Mammary epithelial cell (primary cell): ENCODE measurements at regions of chr12 and their contacts with region 1.

Region 1: DNA sequence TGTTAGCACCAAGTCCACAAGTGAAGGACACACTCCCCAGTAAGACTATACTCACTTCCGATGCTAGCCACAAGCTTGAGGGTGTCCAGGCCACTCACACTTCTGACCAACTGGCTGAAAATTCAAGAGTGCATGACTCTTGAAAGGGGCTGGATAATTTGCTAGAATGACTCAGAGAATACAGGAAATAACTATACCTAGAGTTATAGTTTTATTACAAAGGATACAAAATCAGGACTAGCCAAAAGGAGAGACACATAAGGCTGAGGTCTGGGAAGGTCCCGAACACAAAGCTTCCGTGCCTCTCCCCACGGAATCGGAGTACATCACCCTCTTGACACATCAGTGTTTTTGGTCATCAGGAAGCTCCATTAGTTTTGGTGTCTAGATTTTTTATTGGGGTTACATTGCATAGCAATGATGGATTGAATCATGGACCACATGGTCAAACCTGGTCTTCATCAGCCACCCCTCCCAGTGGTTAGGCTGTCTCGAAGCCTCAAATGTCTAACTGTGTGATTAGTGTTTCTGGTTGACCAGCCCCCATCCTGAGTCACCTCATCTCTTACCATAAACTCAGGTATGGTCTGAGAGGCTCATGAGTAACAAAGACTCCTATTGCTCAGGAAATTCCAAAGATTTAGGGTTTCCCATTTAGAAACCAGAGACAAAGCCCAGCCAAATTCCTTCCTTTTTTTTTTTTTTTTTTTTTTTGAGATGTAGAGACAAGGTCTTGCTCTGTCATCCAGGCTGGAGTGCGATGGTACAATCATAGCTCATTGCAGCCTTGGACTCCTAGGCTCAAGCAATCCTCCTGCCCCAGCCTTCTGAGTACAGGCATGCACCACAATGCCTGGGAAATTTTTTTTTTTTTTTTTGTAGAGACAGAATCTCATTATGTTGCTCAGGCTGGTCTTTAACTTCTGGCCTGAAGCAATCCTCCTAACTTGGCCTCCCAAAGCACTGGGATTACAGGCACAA is 472.0 kb upstream of the TBX3 start:
- DNase-seq: peak; percentile 100
- H3K4me3 ChIP-seq: no peak overlapping the region
- H3K27ac ChIP-seq: peak overlapping the region; percentile 83
- H3K4me1 ChIP-seq: peaks cover 31% of the 10 kb centered on the region
- H3K27me3 ChIP-seq: no peaks in the 10 kb centered on the region
- CTCF ChIP-seq: no peak

Region 2: GRCh38 chr12:114674239-114675047 is 481.5 kb before region 1 on chr12:
- CTCF ChIA-PET with region 1: no interaction called
- dilution Hi-C with region 1: loop called (anchors 5 kb)
- in situ Hi-C with region 1: no loop called
- intact Hi-C with region 1: no loop called
- DNase-seq: peak; percentile 36
- H3K4me3 ChIP-seq: peak overlapping the region; percentile 24 to 46 (median 33)
- H3K27ac ChIP-seq: peak overlapping the region; percentile 82
- H3K4me1 ChIP-seq: peaks cover 88% of the 10 kb centered on the region
- H3K27me3 ChIP-seq: no peaks in the 10 kb centered on the region
- CTCF ChIP-seq: peak in 1 of 2 donors; percentile 4

Region 3: GRCh38 chr12:114933428-114934168 is 222.4 kb before region 1 on chr12:
- CTCF ChIA-PET with region 1: no interaction called
- dilution Hi-C with region 1: no loop called
- in situ Hi-C with region 1: no loop called
- intact Hi-C with region 1: loop called (anchors 5 kb)
- DNase-seq: peak; percentile 83
- H3K4me3 ChIP-seq: no peak overlapping the region
- H3K27ac ChIP-seq: peak overlapping the region; percentile 57
- H3K4me1 ChIP-seq: peaks cover 25% of the 10 kb centered on the region
- H3K27me3 ChIP-seq: no peaks in the 10 kb centered on the region
- CTCF ChIP-seq: no peak

Region 4: GRCh38 chr12:115070313-115070712 is 85.6 kb before region 1 on chr12:
- CTCF ChIA-PET with region 1: no interaction called
- dilution Hi-C with region 1: no loop called
- in situ Hi-C with region 1: no loop called
- intact Hi-C with region 1: loop called (anchors 5 kb)
- DNase-seq: peak; percentile 89
- H3K4me3 ChIP-seq: no peak overlapping the region
- H3K27ac ChIP-seq: peak overlapping the region; percentile 26
- H3K4me1 ChIP-seq: no peaks in the 10 kb centered on the region
- H3K27me3 ChIP-seq: no peaks in the 10 kb centered on the region
- CTCF ChIP-seq: no peak

Region 5: GRCh38 chr12:115227137-115227615 is 71.2 kb after region 1 on chr12:
- CTCF ChIA-PET with region 1: interaction called, 6 read pairs
- dilution Hi-C with region 1: no loop called
- in situ Hi-C with region 1: no loop called
- intact Hi-C with region 1: loop called (anchors 2 kb)
- DNase-seq: peak; percentile 91
- H3K4me3 ChIP-seq: no peak overlapping the region
- H3K27ac ChIP-seq: no peak overlapping the region
- H3K4me1 ChIP-seq: peaks cover 12% of the 10 kb centered on the region
- H3K27me3 ChIP-seq: no peaks in the 10 kb centered on the region
- CTCF ChIP-seq: no peak

Region 6: DNA sequence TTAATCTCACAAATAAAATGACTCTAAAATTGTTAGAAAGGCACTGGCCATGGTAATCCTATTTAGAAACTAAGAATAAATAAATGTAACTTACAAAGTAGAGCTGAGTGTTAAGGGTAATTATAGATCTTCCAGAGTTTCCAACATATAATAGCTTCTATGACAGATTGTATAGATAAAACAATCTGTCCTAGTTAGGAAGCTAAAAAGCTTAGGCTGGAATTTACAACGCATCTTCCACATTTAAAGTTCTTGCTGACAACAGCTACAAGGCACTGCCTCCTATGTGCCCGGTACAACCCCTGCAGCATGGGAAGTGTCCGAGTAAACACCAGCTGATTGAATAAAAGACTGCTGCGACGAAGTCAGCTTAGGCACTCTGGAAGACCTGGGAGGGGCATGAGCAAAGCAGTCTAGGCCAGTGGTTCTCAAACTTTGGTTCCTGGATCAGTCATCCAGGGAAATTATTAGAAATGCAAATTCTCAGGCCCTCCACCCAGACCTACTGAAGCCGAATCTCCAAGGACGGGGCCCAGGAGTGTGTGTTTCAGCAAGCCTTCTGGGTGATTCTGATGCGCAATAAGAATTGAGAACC is 163.6 kb after region 1 on chr12:
- CTCF ChIA-PET with region 1: no interaction called
- dilution Hi-C with region 1: no loop called
- in situ Hi-C with region 1: no loop called
- intact Hi-C with region 1: loop called (anchors 5 kb)
- DNase-seq: no peak
- H3K4me3 ChIP-seq: no peak overlapping the region
- H3K27ac ChIP-seq: no peak overlapping the region
- H3K4me1 ChIP-seq: peaks cover 18% of the 10 kb centered on the region
- H3K27me3 ChIP-seq: no peaks in the 10 kb centered on the region
- CTCF ChIP-seq: no peak

Region 7: DNA sequence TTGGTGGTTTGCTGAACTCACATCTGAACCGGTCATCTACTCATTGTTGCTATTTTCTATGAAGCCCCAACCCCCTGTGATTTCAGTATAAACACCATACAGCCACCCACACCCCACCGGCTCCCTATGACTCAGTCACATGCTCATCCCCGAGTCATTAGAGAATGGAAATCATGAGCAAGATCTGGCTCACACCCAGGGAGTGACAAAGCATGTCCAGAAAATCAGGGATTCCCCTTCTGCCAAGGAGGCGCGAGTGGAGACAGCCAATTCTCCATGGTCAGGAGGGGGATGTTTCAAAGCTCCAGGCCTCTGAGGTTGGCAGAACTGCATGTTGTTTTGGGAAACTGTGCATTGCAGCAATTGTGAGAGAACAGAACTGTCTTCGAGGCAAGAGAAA is 185.5 kb after region 1 on chr12:
- CTCF ChIA-PET with region 1: no interaction called
- dilution Hi-C with region 1: no loop called
- in situ Hi-C with region 1: no loop called
- intact Hi-C with region 1: loop called (anchors 5 kb)
- DNase-seq: peak; percentile 100
- H3K4me3 ChIP-seq: no peak overlapping the region
- H3K27ac ChIP-seq: peak overlapping the region; percentile 93
- H3K4me1 ChIP-seq: peaks cover 18% of the 10 kb centered on the region
- H3K27me3 ChIP-seq: no peaks in the 10 kb centered on the region
- CTCF ChIP-seq: no peak